ENCODE measurements at regions of chr14 and their contacts with region 1.

Region 1: DNA sequence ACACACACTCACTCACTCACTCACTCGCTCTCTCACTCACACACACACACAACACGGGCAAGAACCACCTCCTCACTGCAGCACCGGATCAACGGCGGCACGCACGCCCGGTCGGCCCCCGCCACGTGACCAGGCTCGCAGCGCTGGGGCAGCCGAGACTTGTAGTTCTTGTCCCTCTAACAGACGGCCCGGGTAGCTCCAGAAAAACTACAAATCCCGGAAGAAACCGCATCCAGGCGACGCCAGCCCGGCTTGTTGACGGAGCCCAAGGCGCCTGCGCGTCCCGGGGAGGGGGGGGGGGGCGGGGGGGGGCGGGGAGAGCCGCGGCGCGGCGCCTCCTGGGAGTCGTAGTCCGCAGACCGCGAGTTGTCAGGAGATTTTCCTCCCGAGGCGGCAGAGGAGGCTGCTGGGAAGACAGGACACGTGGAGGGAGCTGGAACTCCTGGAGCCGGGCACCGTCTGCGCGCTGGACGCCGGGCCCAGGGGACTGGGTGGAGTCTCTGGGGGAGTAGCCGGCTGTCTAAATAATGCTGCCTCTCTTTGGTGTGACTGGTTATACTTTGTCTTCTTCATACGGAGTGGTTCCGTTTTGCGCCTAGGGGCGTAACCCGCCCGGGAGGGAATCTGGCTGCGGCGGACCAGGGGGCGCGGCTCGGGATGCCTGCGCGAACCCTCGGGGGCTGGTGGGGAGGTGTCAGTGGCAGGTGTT is at the start of gene MAX:
- DNase-seq: peak; percentile 96 to 99 (median 98)
- ATAC-seq: peak; percentile 82
- H3K4me3 ChIP-seq: peak within 1 kb of the TSS; percentile 81 to 97
- H3K4me3 Mint-ChIP-seq: peak within 1 kb of the TSS; percentile 88
- H3K27ac ChIP-seq: peak within 1 kb of the TSS; percentile 91 to 95
- H3K27ac Mint-ChIP-seq: peak within 1 kb of the TSS; percentile 96
- H3K4me1 ChIP-seq: peaks cover 35% of the 10 kb centered on the region
- H3K4me1 Mint-ChIP-seq: peaks cover 41% of the 10 kb centered on the region
- H3K27me3 ChIP-seq: no peaks in the 10 kb centered on the region
- H3K27me3 Mint-ChIP-seq: no peaks in the 10 kb centered on the region
- CTCF ChIP-seq: no peak
- total RNA-seq, gene MAX: 143 to 153 TPM

Region 2: GRCh38 chr14:63543000-63543825 is 1559.4 kb before region 1 on chr14 and contains the start of gene PPP2R5E:
- CTCF ChIA-PET with region 1: no interaction called
- POLR2A ChIA-PET with region 1: no interaction called
- intact Hi-C with region 1: loop called in 1 of 2 experiments (anchors 5 kb)
- DNase-seq: peak; percentile 95 to 99 (median 97)
- ATAC-seq: peak; percentile 96
- H3K4me3 ChIP-seq: peak within 1 kb of the TSS; percentile 75 to 98
- H3K4me3 Mint-ChIP-seq: peak within 1 kb of the TSS; percentile 98
- H3K27ac ChIP-seq: peak within 1 kb of the TSS; percentile 71 to 91
- H3K27ac Mint-ChIP-seq: peak within 1 kb of the TSS; percentile 93
- H3K4me1 ChIP-seq: peaks cover 17% of the 10 kb centered on the region
- H3K4me1 Mint-ChIP-seq: peaks cover 33% of the 10 kb centered on the region
- H3K27me3 ChIP-seq: no peaks in the 10 kb centered on the region
- H3K27me3 Mint-ChIP-seq: no peaks in the 10 kb centered on the region
- CTCF ChIP-seq: no peak
- total RNA-seq, gene PPP2R5E: 33.5 to 35.9 TPM

Region 3: GRCh38 chr14:63852817-63853731 is 1249.5 kb before region 1 on chr14 and contains the start of gene SYNE2:
- CTCF ChIA-PET with region 1: no interaction called
- POLR2A ChIA-PET with region 1: no interaction called
- intact Hi-C with region 1: loop called in 1 of 2 experiments (anchors 10 kb)
- DNase-seq: peak; percentile 63 to 89 (median 83)
- ATAC-seq: peak; percentile 81
- H3K4me3 ChIP-seq: peak within 1 kb of the TSS; percentile 67 to 79
- H3K4me3 Mint-ChIP-seq: peak within 1 kb of the TSS; percentile 93
- H3K27ac ChIP-seq: peak within 1 kb of the TSS; percentile 69 to 72
- H3K27ac Mint-ChIP-seq: peak within 1 kb of the TSS; percentile 96
- H3K4me1 ChIP-seq: peaks cover 41% of the 10 kb centered on the region
- H3K4me1 Mint-ChIP-seq: peaks cover 44% of the 10 kb centered on the region
- H3K27me3 ChIP-seq: no peaks in the 10 kb centered on the region
- H3K27me3 Mint-ChIP-seq: no peaks in the 10 kb centered on the region
- CTCF ChIP-seq: peak; percentile 19
- total RNA-seq, gene SYNE2: 93.4 to 94.2 TPM

Region 4: GRCh38 chr14:64503478-64504309 is 598.9 kb before region 1 on chr14 and contains the start of gene ZBTB25:
- CTCF ChIA-PET with region 1: no interaction called
- POLR2A ChIA-PET with region 1: interaction called, 3 read pairs
- intact Hi-C with region 1: loop called in 1 of 2 experiments (anchors 2 kb)
- DNase-seq: peak; percentile 91 to 100 (median 96)
- ATAC-seq: peak; percentile 68
- H3K4me3 ChIP-seq: peak within 1 kb of the TSS; percentile 78 to 95
- H3K4me3 Mint-ChIP-seq: peak within 1 kb of the TSS; percentile 91
- H3K27ac ChIP-seq: peak within 1 kb of the TSS; percentile 99 to 100
- H3K27ac Mint-ChIP-seq: peak within 1 kb of the TSS; percentile 100
- H3K4me1 ChIP-seq: peaks cover 59% of the 10 kb centered on the region
- H3K4me1 Mint-ChIP-seq: peaks cover 66% of the 10 kb centered on the region
- H3K27me3 ChIP-seq: no peaks in the 10 kb centered on the region
- H3K27me3 Mint-ChIP-seq: no peaks in the 10 kb centered on the region
- CTCF ChIP-seq: no peak
- total RNA-seq, gene ZBTB25: 42.3 to 43.8 TPM

Region 5: DNA sequence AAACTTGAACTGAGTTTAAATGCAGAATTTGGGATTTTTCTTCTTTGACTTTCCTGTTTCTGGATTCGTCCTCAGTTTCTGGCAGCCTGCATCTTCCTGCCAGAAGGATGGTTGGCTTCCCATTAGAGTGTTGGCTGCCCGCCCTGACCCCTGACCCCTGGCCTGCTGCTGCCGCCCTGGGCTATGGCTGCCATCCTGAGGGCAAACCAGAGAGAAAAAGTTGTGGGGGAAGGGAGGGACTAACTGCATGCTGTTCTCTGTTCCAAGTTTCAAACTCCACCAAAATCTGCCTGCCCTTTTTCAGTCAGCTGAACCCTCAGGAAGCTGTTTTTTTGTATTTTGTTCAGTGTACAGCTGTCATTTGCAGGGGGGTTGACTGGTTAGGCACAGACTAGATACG is 67.5 kb before region 1 on chr14:
- CTCF ChIA-PET with region 1: no interaction called
- POLR2A ChIA-PET with region 1: no interaction called
- intact Hi-C with region 1: no loop called
- DNase-seq: no peak
- ATAC-seq: no peak
- H3K4me3 ChIP-seq: no peak overlapping the region
- H3K4me3 Mint-ChIP-seq: no peak overlapping the region
- H3K27ac ChIP-seq: no peak overlapping the region
- H3K27ac Mint-ChIP-seq: no peak overlapping the region
- H3K4me1 ChIP-seq: no peaks in the 10 kb centered on the region
- H3K4me1 Mint-ChIP-seq: no peaks in the 10 kb centered on the region
- H3K27me3 ChIP-seq: no peaks in the 10 kb centered on the region
- H3K27me3 Mint-ChIP-seq: no peaks in the 10 kb centered on the region
- CTCF ChIP-seq: no peak

Region 6: DNA sequence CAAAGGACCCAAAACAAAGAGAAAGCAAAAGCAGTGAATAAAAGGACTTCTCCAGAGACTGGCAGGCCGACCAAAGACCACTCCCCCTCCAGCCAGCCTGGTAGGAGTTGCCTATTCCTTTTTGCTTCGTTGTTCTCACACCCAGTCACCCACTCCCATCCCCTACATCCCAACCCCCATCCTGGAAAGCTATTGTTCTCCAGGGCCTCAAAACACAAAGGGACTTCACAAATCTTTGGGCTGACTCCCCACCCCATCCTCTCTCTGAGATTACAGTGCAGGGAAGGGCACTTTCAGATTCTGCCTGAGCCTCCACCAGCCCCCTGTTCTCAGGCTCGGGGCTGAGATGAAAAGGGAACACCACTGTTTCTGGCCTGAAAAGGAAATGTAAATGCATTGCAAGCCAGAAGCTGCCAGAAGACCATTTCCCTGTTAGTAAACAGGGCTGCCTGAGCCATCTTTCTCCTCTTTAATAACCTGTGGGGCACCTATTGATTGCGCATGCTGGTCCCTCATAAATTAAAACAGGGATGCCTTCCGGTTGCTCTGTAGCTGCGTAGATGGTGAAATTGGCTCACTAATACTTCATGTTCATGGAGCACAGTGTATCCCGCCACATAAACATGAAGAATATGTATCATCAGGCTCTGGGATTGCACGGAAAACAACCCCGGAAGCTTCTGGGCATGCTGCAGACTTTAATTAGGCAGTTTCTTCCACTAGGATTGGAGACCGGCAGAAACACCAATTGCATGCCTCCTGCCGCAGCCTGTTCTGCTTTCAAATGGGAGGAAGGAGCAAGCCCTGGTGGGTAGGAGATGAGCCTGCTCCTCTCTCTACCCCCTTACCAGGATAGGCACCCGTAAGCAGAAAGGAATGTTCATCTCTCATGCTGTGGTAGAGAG is 179.6 kb after region 1 on chr14:
- CTCF ChIA-PET with region 1: no interaction called
- POLR2A ChIA-PET with region 1: interaction called, 3 read pairs
- intact Hi-C with region 1: loop called (anchors 5 to 10 kb)
- DNase-seq: peak in 3 of 9 experiments; percentile 32 to 58 (median 42)
- ATAC-seq: peak; percentile 51
- H3K4me3 ChIP-seq: peak overlapping the region; percentile 25 to 32
- H3K4me3 Mint-ChIP-seq: peak overlapping the region; percentile 83
- H3K27ac ChIP-seq: peak overlapping the region; percentile 19 to 55
- H3K27ac Mint-ChIP-seq: peak overlapping the region; percentile 95
- H3K4me1 ChIP-seq: peaks cover 32% of the 10 kb centered on the region
- H3K4me1 Mint-ChIP-seq: peaks cover 42% of the 10 kb centered on the region
- H3K27me3 ChIP-seq: no peaks in the 10 kb centered on the region
- H3K27me3 Mint-ChIP-seq: no peaks in the 10 kb centered on the region
- CTCF ChIP-seq: no peak

Region 7: DNA sequence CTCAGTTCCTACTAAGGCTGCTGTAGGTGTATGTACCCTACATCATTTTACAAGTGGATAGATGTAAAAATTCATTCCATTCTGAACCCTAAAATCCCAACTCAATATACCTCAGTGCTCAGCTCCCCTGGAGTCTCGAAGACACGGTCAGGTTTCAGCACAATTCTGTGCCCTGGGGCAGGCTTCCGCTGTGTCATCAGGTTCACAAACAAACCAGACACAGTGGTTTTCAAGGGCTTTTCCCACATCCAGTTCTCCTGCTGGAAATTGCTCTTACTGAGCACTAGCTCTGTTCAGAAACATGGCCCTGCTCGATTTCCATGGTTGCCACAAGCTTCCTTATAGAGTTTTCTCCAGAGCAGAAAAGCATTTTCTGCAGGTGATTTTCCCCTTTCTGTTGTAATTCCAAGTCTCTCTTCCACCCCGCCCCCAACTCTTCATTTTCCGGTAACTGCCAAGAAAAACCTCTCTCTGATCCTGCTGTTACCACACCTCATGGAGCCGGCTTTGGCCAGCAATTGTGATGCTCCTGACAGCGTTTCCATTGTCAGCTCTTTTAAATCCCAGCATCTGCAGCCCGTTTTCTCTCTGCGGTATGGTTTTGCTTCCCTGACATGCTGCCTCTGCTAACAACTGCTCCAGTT is 900.6 kb after region 1 on chr14:
- CTCF ChIA-PET with region 1: no interaction called
- POLR2A ChIA-PET with region 1: no interaction called
- intact Hi-C with region 1: no loop called
- DNase-seq: no peak
- ATAC-seq: no peak
- H3K4me3 ChIP-seq: no peak overlapping the region
- H3K4me3 Mint-ChIP-seq: no peak overlapping the region
- H3K27ac ChIP-seq: no peak overlapping the region
- H3K27ac Mint-ChIP-seq: no peak overlapping the region
- H3K4me1 ChIP-seq: no peaks in the 10 kb centered on the region
- H3K4me1 Mint-ChIP-seq: no peaks in the 10 kb centered on the region
- H3K27me3 ChIP-seq: no peaks in the 10 kb centered on the region
- H3K27me3 Mint-ChIP-seq: no peaks in the 10 kb centered on the region
- CTCF ChIP-seq: no peak

Region 8: DNA sequence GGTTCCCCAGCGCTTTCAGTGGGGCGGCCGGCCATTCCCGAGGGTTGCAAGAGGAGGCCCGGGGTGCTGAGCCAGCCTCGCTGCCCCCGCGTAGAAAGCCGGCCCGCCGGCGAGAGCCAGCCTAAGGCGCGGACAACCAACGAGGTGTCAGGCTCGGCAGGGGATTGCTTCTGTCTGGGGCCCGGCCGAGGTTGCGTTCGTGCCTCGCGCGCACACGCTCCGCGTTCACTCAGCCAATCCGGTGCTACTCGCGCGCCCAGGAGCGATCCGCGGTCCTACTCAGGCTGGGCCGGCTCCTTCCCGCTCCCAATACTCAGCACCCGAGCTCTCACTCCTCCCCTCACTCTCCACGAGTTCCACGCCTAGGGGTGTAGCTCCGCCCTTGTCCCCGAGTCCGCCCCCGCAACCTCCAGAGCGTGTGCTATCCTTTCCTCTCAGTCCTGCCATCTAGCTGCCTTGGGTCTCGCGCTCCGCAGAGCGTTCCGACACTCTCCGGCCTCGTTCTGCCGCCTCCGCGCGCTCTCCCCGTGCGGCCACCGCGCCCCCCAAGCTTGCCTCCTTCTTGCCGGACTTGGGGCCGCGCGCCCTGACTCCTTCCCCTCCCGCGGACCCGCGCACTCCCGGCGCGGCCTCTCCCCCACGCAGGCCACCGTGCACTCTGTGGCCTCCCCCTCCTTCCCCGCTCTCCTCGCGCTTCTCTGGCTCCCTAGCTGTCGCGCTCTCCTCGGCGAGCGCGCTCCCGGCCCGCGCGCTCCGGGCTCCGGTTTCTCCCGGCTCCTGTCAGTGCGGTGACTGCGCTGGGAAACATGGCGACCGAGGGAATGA is 1405.3 kb after region 1 on chr14 and contains the start of gene GPHN:
- CTCF ChIA-PET with region 1: no interaction called
- POLR2A ChIA-PET with region 1: no interaction called
- intact Hi-C with region 1: loop called in 1 of 2 experiments (anchors 10 kb)
- DNase-seq: peak; percentile 53 to 91 (median 82)
- ATAC-seq: peak; percentile 90
- H3K4me3 ChIP-seq: peak within 1 kb of the TSS; percentile 75 to 81
- H3K4me3 Mint-ChIP-seq: peak within 1 kb of the TSS; percentile 99
- H3K27ac ChIP-seq: peak within 1 kb of the TSS; percentile 55 to 67
- H3K27ac Mint-ChIP-seq: peak within 1 kb of the TSS; percentile 91
- H3K4me1 ChIP-seq: no peaks in the 10 kb centered on the region
- H3K4me1 Mint-ChIP-seq: peaks cover 35% of the 10 kb centered on the region
- H3K27me3 ChIP-seq: no peaks in the 10 kb centered on the region
- H3K27me3 Mint-ChIP-seq: no peaks in the 10 kb centered on the region
- CTCF ChIP-seq: no peak
- total RNA-seq, gene GPHN: 8.2 to 9.3 TPM